Panc1 (cell line): ENCODE measurements at regions of chr16 and their contacts with region 1.

Region 1: DNA sequence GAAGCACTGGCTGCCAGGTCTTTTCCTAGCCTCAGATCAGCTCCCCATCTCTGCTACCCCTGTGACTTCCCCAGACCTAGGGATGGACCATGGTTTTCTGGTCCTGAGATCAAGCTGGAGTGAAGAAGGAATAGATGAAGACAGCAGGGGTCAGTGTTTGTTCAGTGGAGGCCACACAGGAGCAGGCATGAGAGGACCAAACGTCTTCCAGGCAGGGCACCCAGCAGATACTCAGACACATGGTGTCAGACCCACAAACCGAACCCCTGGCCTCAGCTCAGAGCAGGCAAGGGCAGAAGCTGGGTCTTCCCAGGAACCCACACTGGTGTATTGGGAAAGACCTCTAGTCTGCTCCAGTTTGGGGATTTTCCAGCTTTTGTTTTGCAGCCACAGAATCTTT is 189.7 kb downstream of the IRX5 start:
- DNase-seq: no peak
- ATAC-seq: 0 out of 2 replicates have a peak, but pooled peaks have one; percentile 45
- H3K4me3 ChIP-seq: no peak overlapping the region
- H3K27ac ChIP-seq: no peak overlapping the region
- H3K4me1 ChIP-seq: no peaks in the 10 kb centered on the region
- H3K27me3 ChIP-seq: no peaks in the 10 kb centered on the region
- CTCF ChIP-seq: no peak; the same call in 1 of the 2 replicates

Region 2: GRCh38 chr16:55370762-55371482 is 250.5 kb after region 1 on chr16:
- CTCF ChIA-PET with region 1: no interaction called
- POLR2A ChIA-PET with region 1: interaction called, 5 read pairs
- in situ Hi-C with region 1: no loop called
- intact Hi-C with region 1: loop called (anchors 10 kb)
- DNase-seq: no peak
- ATAC-seq: peak; percentile 98
- H3K4me3 ChIP-seq: peak overlapping the region in 1 of 2 experiments; percentile 26; a peak in 1 of 4 replicates
- H3K27ac ChIP-seq: no peak overlapping the region
- H3K4me1 ChIP-seq: peaks cover 3% of the 10 kb centered on the region
- H3K27me3 ChIP-seq: peaks cover 37% of the 10 kb centered on the region
- CTCF ChIP-seq: peak; percentile 73